ENCODE measurements at regions of chr12 and their contacts with region 1.

Region 1: GRCh38 chr12:24991209-24992049 is 42.5 kb upstream of the BCAT1 start:
- DNase-seq: no peak
- H3K4me3 ChIP-seq: no peak overlapping the region
- H3K27ac ChIP-seq: no peak overlapping the region
- H3K4me1 ChIP-seq: no peaks in the 10 kb centered on the region
- H3K27me3 ChIP-seq: no peaks in the 10 kb centered on the region
- CTCF ChIP-seq: peak; percentile 38 to 56 (median 55)
- POLR2A ChIP-seq: no peak

Region 2: GRCh38 chr12:25130741-25131188 is 139.3 kb after region 1 on chr12:
- intact Hi-C with region 1: loop called (anchors 10 kb)
- DNase-seq: no peak
- H3K4me3 ChIP-seq: no peak overlapping the region
- H3K27ac ChIP-seq: no peak overlapping the region
- H3K4me1 ChIP-seq: no peaks in the 10 kb centered on the region
- H3K27me3 ChIP-seq: no peaks in the 10 kb centered on the region
- CTCF ChIP-seq: peak in 2 of 3 experiments; percentile 27 to 67
- POLR2A ChIP-seq: no peak

Region 3: DNA sequence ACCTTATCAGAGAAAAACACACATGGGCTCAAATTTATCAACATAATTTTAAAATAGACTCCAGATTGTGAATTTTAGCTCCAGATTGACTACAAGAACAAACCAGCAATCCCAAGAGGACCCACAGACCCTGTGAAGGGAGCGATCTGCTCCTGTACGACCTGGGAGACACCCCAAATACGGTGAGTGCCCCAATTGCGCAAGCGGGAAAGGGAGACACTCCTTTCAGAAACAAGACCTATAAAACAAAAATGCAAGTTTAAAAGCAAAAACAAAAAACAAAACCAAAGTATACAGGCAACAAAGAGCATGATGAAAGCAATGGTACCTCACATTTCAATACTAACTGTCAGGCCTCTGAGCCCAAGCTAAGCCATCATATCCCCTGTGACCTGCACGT is 171.4 kb after region 1 on chr12:
- intact Hi-C with region 1: no loop called
- DNase-seq: no peak
- H3K4me3 ChIP-seq: no peak overlapping the region
- H3K27ac ChIP-seq: no peak overlapping the region
- H3K4me1 ChIP-seq: no peaks in the 10 kb centered on the region
- H3K27me3 ChIP-seq: no peaks in the 10 kb centered on the region
- CTCF ChIP-seq: no peak
- POLR2A ChIP-seq: no peak

Measured in testis (tissue), 5 donors.